Endothelial cell of umbilical vein (primary cell): ENCODE measurements at regions of chr2 and their contacts with region 1.

Region 1: GRCh38 chr2:33395655-33396249 is 80.7 kb upstream of the RASGRP3 start:
- DNase-seq: peak; percentile 76
- H3K4me3 ChIP-seq: no peak overlapping the region
- H3K27ac ChIP-seq: no peak overlapping the region
- H3K4me1 ChIP-seq: no peaks in the 10 kb centered on the region
- H3K27me3 ChIP-seq: no peaks in the 10 kb centered on the region
- CTCF ChIP-seq: peak; percentile 56 to 58
- POLR2A ChIP-seq: no peak

Region 2: DNA sequence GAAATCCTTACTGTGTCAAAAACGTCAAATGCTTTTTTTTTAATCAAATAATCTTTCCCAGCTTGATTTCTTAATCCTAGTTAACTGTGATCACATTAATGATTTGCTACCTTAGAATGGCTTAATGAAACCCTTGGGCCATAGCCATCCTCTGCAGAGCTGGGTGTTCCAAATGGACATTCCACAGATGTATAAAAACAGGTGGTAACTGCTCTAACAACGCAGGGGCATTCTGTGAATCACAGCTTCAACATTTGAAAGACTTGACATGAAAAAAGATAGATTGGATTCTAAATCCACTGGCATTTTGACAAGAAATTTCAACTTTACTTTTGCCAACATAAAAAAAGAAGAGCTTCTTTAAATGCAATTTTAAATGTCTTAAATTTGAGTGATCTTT is 10.9 kb after region 1 on chr2:
- CTCF ChIA-PET with region 1: interaction called, 22 read pairs
- POLR2A ChIA-PET with region 1: no interaction called
- dilution Hi-C with region 1: no loop called
- intact Hi-C with region 1: no loop called
- DNase-seq: no peak
- H3K4me3 ChIP-seq: no peak overlapping the region
- H3K27ac ChIP-seq: no peak overlapping the region
- H3K4me1 ChIP-seq: no peaks in the 10 kb centered on the region
- H3K27me3 ChIP-seq: no peaks in the 10 kb centered on the region
- CTCF ChIP-seq: no peak
- POLR2A ChIP-seq: no peak